ENCODE measurements at regions of chr5 and their contacts with region 1.

Region 1: DNA sequence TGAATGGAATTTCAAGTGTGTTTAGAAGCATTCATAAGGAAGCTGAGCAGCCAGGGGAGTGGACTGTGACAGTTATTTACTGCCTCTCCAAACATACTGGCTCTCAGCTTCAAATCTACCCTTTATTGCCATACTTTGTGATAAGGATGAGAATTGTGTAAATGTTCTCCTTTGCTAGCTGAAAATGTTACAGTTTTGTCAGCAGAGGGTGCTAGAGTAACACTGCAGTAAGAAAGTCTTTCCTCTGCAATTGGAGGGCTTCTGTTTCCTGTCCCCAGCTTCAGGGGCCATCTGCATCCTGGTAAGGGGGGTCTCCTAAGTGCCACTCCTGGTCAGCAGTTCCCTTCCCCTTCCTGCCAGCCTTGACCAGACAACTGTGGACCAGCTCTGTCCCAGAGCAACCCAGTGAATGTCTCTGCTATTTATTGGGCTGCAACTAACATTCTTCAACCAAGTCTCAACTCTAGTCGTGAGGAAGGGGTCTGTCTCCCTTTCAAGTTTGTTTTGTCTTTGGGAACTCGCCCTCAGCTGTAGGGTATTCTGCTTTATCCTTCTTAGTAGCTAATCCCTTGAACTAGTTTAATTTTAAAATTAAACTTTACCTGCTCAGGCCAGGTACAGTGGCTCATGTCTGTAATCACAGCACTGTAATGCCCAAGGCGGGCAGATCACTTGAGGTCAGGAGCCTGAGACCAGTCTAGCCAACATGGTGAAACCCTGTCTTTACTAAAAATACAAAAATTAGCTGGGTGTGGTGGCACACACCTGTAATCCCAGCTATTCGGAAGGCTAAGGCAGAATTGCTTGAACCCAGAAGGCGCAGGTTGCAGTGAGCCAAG is 45.3 kb downstream of the RAPGEF6 start:
- DNase-seq: no peak
- ATAC-seq: peak; percentile 80 to 90 (median 85)
- H3K4me3 ChIP-seq: no peak overlapping the region
- H3K27ac ChIP-seq: no peak overlapping the region
- H3K4me1 ChIP-seq: no peaks in the 10 kb centered on the region
- H3K27me3 ChIP-seq: no peaks in the 10 kb centered on the region
- CTCF ChIP-seq: peak; percentile 82 to 92 (median 84)
- POLR2A ChIP-seq: no peak

Region 2: DNA sequence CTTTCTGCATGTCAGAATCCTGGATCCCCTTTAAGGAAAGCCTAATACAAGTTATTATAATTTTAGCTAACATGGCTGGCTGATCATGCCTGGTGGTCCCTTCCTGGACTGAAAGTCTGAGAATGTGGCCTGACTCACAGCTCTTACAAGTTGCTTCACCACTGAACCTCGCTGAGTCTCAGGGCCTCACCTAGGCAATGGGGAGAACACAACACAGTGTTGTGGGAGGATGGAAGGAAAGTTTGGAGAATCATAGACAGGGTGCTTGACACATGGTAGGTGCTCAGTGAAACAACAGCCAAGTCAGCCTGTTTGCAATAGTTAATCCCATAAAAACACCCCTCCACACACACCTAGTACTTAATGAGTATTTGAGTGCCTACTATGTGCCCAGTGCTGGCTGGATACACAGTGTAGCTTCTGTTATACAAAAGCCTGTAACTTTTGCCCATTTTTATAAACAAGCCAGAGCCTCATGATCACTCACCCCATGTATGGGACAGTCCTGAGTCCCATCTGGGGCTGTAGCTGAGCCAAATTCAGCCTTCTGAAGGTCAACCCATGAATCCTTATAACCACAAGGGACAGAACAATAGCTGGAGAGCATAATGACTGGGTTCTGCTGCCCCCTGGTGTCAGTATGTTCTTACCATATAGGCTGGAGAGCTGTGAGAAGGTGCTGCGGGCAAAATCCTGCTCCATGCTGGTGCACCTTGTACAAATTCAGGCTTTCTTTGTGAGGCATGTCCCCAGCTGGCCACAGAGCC is 417.9 kb after region 1 on chr5:
- intact Hi-C with region 1: loop called (anchors 10 kb)
- DNase-seq: peak in 2 of 3 donors; percentile 70 to 78
- ATAC-seq: peak; percentile 81 to 87 (median 83)
- H3K4me3 ChIP-seq: no peak overlapping the region
- H3K27ac ChIP-seq: no peak overlapping the region
- H3K4me1 ChIP-seq: peaks cover 0 to 4% (median 0%) of the 10 kb centered on the region in 4 donors
- H3K27me3 ChIP-seq: no peaks in the 10 kb centered on the region
- CTCF ChIP-seq: peak; percentile 70 to 86 (median 78)
- POLR2A ChIP-seq: no peak